CD4-positive, alpha-beta T cell (primary cell): ENCODE measurements at regions of chr1 and their contacts with region 1.

Region 1: GRCh38 chr1:235160957-235161684 is at the start of gene RBM34:
- DNase-seq: peak; percentile 86 to 96 (median 90)
- ATAC-seq: peak; percentile 84
- H3K4me3 ChIP-seq: peak within 1 kb of the TSS; percentile 75
- H3K4me3 Mint-ChIP-seq: peak within 1 kb of the TSS; percentile 95
- H3K27ac ChIP-seq: peak within 1 kb of the TSS; percentile 82 to 88
- H3K27ac Mint-ChIP-seq: peak within 1 kb of the TSS; percentile 97
- H3K4me1 ChIP-seq: peaks cover 43% of the 10 kb centered on the region
- H3K4me1 Mint-ChIP-seq: peaks cover 26% of the 10 kb centered on the region
- H3K27me3 ChIP-seq: no peaks in the 10 kb centered on the region
- H3K27me3 Mint-ChIP-seq: no peaks in the 10 kb centered on the region
- CTCF ChIP-seq: no peak
- total RNA-seq, gene RBM34: 195 to 218 TPM

Region 2: DNA sequence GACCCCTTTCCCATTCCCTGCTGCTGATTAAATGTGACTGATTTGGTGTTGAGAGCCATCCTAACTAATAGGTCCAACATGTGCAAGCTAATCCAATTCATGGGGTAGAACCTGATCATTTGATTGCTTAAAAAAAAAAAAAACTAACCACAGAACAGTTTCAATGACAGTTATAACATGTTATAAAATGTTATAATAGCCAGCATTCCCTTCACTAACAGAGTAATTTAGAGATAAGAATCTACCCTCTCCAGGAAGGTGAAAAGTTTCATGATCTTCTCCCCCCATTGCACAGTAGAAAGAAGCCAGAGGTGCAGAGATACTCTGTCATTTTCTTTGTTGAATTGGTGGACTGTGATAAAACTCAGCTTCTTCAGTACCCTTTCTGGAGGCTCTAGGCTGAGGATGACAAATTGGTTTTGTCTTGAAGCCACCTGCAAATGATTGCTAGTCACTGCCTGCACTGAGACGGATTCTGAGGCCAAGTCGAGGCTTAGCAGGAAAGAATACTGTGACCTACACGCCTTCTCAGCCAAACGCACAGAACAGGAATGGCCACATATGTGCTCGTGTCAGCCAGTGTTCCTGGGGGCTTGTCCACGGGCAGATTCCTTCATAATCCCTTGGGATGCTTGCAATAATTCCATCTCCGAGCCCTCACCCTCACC is 335.5 kb before region 1 on chr1:
- CTCF ChIA-PET with region 1: no interaction called
- POLR2A ChIA-PET with region 1: no interaction called
- intact Hi-C with region 1: no loop called
- DNase-seq: no peak
- ATAC-seq: no peak
- H3K4me3 ChIP-seq: no peak overlapping the region
- H3K4me3 Mint-ChIP-seq: no peak overlapping the region
- H3K27ac ChIP-seq: no peak overlapping the region
- H3K27ac Mint-ChIP-seq: no peak overlapping the region
- H3K4me1 ChIP-seq: no peaks in the 10 kb centered on the region
- H3K4me1 Mint-ChIP-seq: peaks cover 10% of the 10 kb centered on the region
- H3K27me3 ChIP-seq: no peaks in the 10 kb centered on the region
- H3K27me3 Mint-ChIP-seq: no peaks in the 10 kb centered on the region
- CTCF ChIP-seq: no peak

Region 3: GRCh38 chr1:235075188-235075926 is 85.8 kb before region 1 on chr1:
- CTCF ChIA-PET with region 1: no interaction called
- POLR2A ChIA-PET with region 1: no interaction called
- intact Hi-C with region 1: no loop called
- DNase-seq: peak in 11 of 14 experiments; percentile 10 to 80 (median 29)
- ATAC-seq: peak; percentile 68
- H3K4me3 ChIP-seq: peak overlapping the region; percentile 15
- H3K4me3 Mint-ChIP-seq: no peak overlapping the region
- H3K27ac ChIP-seq: no peak overlapping the region
- H3K27ac Mint-ChIP-seq: peak overlapping the region; percentile 73
- H3K4me1 ChIP-seq: peaks cover 38% of the 10 kb centered on the region
- H3K4me1 Mint-ChIP-seq: peaks cover 16% of the 10 kb centered on the region
- H3K27me3 ChIP-seq: no peaks in the 10 kb centered on the region
- H3K27me3 Mint-ChIP-seq: no peaks in the 10 kb centered on the region
- CTCF ChIP-seq: no peak

Region 4: DNA sequence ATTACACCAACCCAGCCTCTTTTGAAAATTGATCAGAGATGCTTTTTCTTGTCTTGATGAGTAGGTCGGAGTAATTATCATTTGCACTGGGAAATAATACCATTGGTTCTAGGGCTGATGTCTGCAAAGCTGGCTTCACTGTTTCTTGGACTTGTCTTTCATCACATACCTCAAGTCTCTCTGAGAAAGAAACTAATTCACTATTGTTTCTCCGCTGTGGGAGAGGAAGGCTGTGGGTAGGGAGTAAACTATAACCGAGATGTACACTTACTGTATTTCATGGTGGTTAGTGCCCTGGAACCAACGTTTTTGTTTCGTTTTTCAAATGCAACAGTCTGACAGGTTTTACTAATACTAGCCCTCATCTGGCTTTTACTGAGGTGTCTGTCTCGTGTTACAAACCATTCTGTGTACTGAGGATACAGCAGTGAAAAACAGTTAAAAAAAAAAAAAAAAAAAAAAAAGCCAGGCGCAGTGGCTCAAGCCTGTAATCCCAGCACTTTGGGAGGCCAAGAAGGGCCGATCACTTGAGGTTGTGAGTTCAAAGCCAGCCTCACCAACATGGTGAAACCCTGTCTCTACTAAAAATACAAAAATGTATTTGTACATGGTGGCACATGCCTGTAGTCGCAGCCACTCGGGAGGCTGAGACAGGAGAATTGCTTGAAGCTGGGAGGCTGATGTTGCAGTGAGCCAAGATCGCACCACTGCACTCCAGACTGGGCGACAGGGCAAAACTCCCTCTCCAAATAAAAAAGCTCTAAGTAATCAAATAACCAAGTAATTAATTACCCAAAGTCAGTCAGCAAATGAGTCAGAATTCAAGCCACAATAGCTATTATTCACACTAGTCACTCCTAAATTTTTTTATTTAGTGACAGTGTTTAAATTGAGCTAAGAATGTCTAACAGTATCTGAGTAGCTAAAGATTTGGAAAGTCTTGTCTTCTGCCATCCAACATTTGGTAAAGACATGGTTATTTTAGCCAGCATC is 55.8 kb before region 1 on chr1:
- CTCF ChIA-PET with region 1: interaction called, 4 read pairs
- POLR2A ChIA-PET with region 1: interaction called, 8 read pairs
- intact Hi-C with region 1: loop called in 1 of 2 experiments (anchors 10 kb)
- DNase-seq: peak in 3 of 14 experiments; percentile 38 to 66 (median 47)
- ATAC-seq: no peak
- H3K4me3 ChIP-seq: peak overlapping the region; percentile 40
- H3K4me3 Mint-ChIP-seq: peak overlapping the region; percentile 85
- H3K27ac ChIP-seq: no peak overlapping the region
- H3K27ac Mint-ChIP-seq: peak overlapping the region; percentile 51
- H3K4me1 ChIP-seq: peaks cover 25% of the 10 kb centered on the region
- H3K4me1 Mint-ChIP-seq: peaks cover 41% of the 10 kb centered on the region
- H3K27me3 ChIP-seq: no peaks in the 10 kb centered on the region
- H3K27me3 Mint-ChIP-seq: no peaks in the 10 kb centered on the region
- CTCF ChIP-seq: no peak

Region 5: GRCh38 chr1:235147269-235147668 is 13.9 kb before region 1 on chr1:
- CTCF ChIA-PET with region 1: interaction called, 3 read pairs
- POLR2A ChIA-PET with region 1: interaction called, 18 read pairs
- intact Hi-C with region 1: no loop called
- DNase-seq: no peak
- ATAC-seq: no peak
- H3K4me3 ChIP-seq: no peak overlapping the region
- H3K4me3 Mint-ChIP-seq: no peak overlapping the region
- H3K27ac ChIP-seq: no peak overlapping the region
- H3K27ac Mint-ChIP-seq: no peak overlapping the region
- H3K4me1 ChIP-seq: peaks cover 5% of the 10 kb centered on the region
- H3K4me1 Mint-ChIP-seq: peaks cover 17% of the 10 kb centered on the region
- H3K27me3 ChIP-seq: no peaks in the 10 kb centered on the region
- H3K27me3 Mint-ChIP-seq: no peaks in the 10 kb centered on the region
- CTCF ChIP-seq: no peak

Region 6: GRCh38 chr1:235320521-235321179 is 159.5 kb after region 1 on chr1:
- CTCF ChIA-PET with region 1: no interaction called
- POLR2A ChIA-PET with region 1: interaction called, 4 read pairs
- intact Hi-C with region 1: loop called in 1 of 2 experiments (anchors 5 kb)
- DNase-seq: no peak
- ATAC-seq: no peak
- H3K4me3 ChIP-seq: no peak overlapping the region
- H3K4me3 Mint-ChIP-seq: peak overlapping the region; percentile 8
- H3K27ac ChIP-seq: no peak overlapping the region
- H3K27ac Mint-ChIP-seq: peak overlapping the region; percentile 2
- H3K4me1 ChIP-seq: peaks cover 60% of the 10 kb centered on the region
- H3K4me1 Mint-ChIP-seq: peaks cover 68% of the 10 kb centered on the region
- H3K27me3 ChIP-seq: no peaks in the 10 kb centered on the region
- H3K27me3 Mint-ChIP-seq: no peaks in the 10 kb centered on the region
- CTCF ChIP-seq: no peak

Region 7: DNA sequence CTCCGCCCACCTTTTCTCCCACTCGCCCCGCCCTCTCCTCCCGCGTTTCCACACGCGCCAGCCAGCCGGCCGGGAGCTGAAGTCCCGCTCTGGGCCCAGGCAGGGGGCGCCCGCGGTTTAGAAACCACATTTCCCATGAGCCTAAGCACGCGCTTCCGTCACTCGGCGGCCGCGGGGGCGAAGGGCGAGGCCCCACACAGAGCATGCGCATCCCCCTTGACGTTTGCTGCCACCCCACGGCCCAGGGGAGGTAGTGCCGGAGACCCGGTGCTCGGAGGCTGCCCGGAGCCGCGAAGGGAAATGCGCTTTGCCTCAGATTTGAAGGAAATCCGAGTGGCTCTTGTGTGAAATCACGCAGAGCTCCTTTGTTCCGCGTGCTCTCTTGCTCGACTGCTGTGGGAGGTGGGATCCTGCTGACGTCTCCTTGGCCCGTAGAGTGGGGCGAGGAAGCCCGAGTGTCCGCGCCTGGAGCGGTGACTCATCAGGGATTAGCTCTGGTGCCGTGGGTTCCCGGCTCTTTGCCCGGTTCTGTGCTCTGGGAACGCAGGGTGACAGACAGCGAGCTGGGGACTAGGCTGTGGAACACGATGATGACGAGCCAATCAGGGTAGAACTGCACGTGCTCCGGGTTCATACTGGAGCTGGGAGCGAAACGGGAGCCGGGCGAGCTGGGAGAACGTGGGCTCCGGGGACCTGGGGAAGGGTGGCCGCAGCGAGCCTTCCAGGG is 343.5 kb after region 1 on chr1:
- CTCF ChIA-PET with region 1: interaction called, 4 read pairs
- POLR2A ChIA-PET with region 1: interaction called, 19 read pairs
- intact Hi-C with region 1: no loop called
- DNase-seq: peak; percentile 96 to 100 (median 98)
- ATAC-seq: peak; percentile 86
- H3K4me3 ChIP-seq: peak overlapping the region; percentile 79
- H3K4me3 Mint-ChIP-seq: peak overlapping the region; percentile 92
- H3K27ac ChIP-seq: peak overlapping the region; percentile 89 to 93
- H3K27ac Mint-ChIP-seq: peak overlapping the region; percentile 96
- H3K4me1 ChIP-seq: peaks cover 15% of the 10 kb centered on the region
- H3K4me1 Mint-ChIP-seq: peaks cover 20% of the 10 kb centered on the region
- H3K27me3 ChIP-seq: no peaks in the 10 kb centered on the region
- H3K27me3 Mint-ChIP-seq: no peaks in the 10 kb centered on the region
- CTCF ChIP-seq: peak; percentile 91